Naive thymus-derived CD4-positive, alpha-beta T cell (primary cell): ENCODE measurements at regions of chr22 and their contacts with region 1.

Region 1: DNA sequence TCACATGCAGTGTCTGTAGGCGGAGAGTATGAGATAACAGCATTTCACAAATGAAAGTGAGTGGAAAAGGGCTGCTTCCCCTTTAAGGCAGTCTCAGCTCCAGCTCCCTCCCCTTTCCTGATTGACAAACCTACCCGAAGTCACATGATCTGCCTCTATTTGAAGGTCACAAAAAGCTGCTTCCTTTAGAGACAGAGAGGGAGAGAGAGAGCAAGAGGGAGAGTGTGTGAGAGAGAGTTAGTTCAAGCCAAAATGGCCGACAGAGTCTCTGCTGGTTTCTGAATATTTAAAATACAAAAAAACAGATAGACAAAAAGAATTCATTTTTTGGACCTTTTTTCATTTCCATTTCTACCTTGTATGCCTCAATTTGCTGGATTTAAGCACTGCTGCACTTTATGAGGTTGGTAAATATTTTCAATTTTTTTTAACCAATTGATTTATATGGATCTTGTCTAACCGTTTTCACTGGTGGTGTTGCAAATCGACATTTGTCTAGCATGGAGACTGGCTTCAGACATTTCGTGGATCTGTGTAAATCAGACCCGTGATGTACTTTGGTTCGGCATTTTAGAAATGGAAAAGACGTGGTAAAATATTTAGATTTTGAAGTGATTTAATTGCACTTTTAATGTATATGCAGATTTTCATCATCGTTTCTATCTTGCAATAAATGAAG is at the start of gene TNRC6B:
- DNase-seq: peak in 8 of 9 donors; percentile 68 to 95 (median 90)
- ATAC-seq: peak; percentile 98
- H3K4me3 ChIP-seq: peak within 1 kb of the TSS; percentile 72
- H3K4me3 Mint-ChIP-seq: peak within 1 kb of the TSS; percentile 80 to 97 (median 90)
- H3K27ac ChIP-seq: peak within 1 kb of the TSS; percentile 71
- H3K27ac Mint-ChIP-seq: peak within 1 kb of the TSS; percentile 85 to 94 (median 91)
- H3K4me1 ChIP-seq: peaks cover 35 to 44% of the 10 kb centered on the region in 2 donors
- H3K4me1 Mint-ChIP-seq: peaks cover 38 to 77% (median 63%) of the 10 kb centered on the region in 7 donors
- H3K27me3 ChIP-seq: no peaks in the 10 kb centered on the region
- H3K27me3 Mint-ChIP-seq: no peaks in the 10 kb centered on the region
- total RNA-seq, gene TNRC6B: 67.4 to 165 (median 146) TPM

Region 2: GRCh38 chr22:39800790-39801520 is 376.9 kb before region 1 on chr22:
- CTCF ChIA-PET with region 1: no interaction called
- POLR2A ChIA-PET with region 1: no interaction called
- intact Hi-C with region 1: no loop called
- DNase-seq: no peak
- ATAC-seq: no peak
- H3K4me3 ChIP-seq: no peak overlapping the region
- H3K4me3 Mint-ChIP-seq: no peak overlapping the region
- H3K27ac ChIP-seq: no peak overlapping the region
- H3K27ac Mint-ChIP-seq: no peak overlapping the region
- H3K4me1 ChIP-seq: no peaks in the 10 kb centered on the region
- H3K4me1 Mint-ChIP-seq: peaks cover 8 to 12% (median 11%) of the 10 kb centered on the region in 7 donors
- H3K27me3 ChIP-seq: no peaks in the 10 kb centered on the region
- H3K27me3 Mint-ChIP-seq: peaks cover 0 to 30% (median 6%) of the 10 kb centered on the region in 5 donors

Region 3: GRCh38 chr22:39825661-39826102 is 352.2 kb before region 1 on chr22:
- CTCF ChIA-PET with region 1: no interaction called
- POLR2A ChIA-PET with region 1: no interaction called
- intact Hi-C with region 1: no loop called
- DNase-seq: no peak
- ATAC-seq: no peak
- H3K4me3 ChIP-seq: no peak overlapping the region
- H3K4me3 Mint-ChIP-seq: no peak overlapping the region
- H3K27ac ChIP-seq: no peak overlapping the region
- H3K27ac Mint-ChIP-seq: no peak overlapping the region
- H3K4me1 ChIP-seq: no peaks in the 10 kb centered on the region
- H3K4me1 Mint-ChIP-seq: peaks cover 0 to 21% (median 6%) of the 10 kb centered on the region in 7 donors
- H3K27me3 ChIP-seq: no peaks in the 10 kb centered on the region
- H3K27me3 Mint-ChIP-seq: peaks cover 0 to 24% (median 0%) of the 10 kb centered on the region in 5 donors

Region 4: GRCh38 chr22:40044102-40044869 is 133.6 kb before region 1 on chr22:
- CTCF ChIA-PET with region 1: no interaction called
- POLR2A ChIA-PET with region 1: interaction called, 39 read pairs
- intact Hi-C with region 1: loop called (anchors 1 kb)
- DNase-seq: peak; percentile 87 to 100 (median 99)
- ATAC-seq: peak; percentile 92
- H3K4me3 ChIP-seq: peak overlapping the region; percentile 81
- H3K4me3 Mint-ChIP-seq: peak overlapping the region; percentile 94 to 99 (median 98)
- H3K27ac ChIP-seq: peak overlapping the region; percentile 88
- H3K27ac Mint-ChIP-seq: peak overlapping the region; percentile 98 to 100 (median 99)
- H3K4me1 ChIP-seq: peaks cover 15 to 29% of the 10 kb centered on the region in 2 donors
- H3K4me1 Mint-ChIP-seq: peaks cover 23 to 53% (median 40%) of the 10 kb centered on the region in 7 donors
- H3K27me3 ChIP-seq: no peaks in the 10 kb centered on the region
- H3K27me3 Mint-ChIP-seq: peaks cover 3 to 17% (median 7%) of the 10 kb centered on the region in 5 donors

Region 5: DNA sequence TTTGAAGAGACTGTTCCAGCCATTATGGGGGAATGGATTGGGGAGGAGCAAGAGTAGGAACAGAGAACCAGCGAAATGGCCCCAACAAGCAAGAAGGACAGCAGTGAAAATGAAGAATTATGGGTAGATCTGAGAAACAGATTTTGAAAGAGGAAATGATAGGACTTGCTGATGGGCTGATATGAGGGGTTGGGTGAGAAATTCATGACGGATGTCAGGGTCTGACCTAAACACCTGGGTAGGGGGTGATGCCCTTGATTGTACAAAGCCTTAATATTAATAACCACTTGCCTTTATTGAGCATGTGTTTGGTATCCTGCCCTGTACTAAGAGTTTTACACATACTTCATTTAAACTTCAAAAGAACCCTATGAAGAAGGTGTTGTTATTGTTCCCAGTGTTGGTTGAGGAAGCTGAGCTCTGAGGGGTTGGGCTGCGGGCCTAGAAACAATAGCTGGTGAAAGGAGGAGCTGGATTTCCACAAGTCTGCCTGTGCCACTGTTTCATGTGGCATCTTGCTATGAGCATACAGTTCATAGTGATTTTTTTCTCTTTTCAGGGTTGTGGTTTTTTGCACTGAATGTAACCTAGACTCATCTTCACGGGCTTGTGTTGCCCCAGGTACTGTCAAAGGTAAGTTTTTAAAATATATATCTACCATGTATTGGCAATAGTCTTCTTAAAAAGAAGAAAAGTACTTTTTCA is 61.2 kb before region 1 on chr22:
- CTCF ChIA-PET with region 1: no interaction called
- POLR2A ChIA-PET with region 1: interaction called, 4 read pairs
- intact Hi-C with region 1: loop called in 1 of 2 experiments (anchors 1 kb)
- DNase-seq: peak in 8 of 9 donors; percentile 26 to 88 (median 84)
- ATAC-seq: peak; percentile 95
- H3K4me3 ChIP-seq: peak overlapping the region; percentile 6
- H3K4me3 Mint-ChIP-seq: peak overlapping the region; percentile 26 to 89 (median 78)
- H3K27ac ChIP-seq: peak overlapping the region; percentile 48
- H3K27ac Mint-ChIP-seq: peak overlapping the region; percentile 79 to 94 (median 87)
- H3K4me1 ChIP-seq: peaks cover 24 to 64% of the 10 kb centered on the region in 2 donors
- H3K4me1 Mint-ChIP-seq: peaks cover 31 to 95% (median 92%) of the 10 kb centered on the region in 7 donors
- H3K27me3 ChIP-seq: no peaks in the 10 kb centered on the region
- H3K27me3 Mint-ChIP-seq: no peaks in the 10 kb centered on the region

Region 6: GRCh38 chr22:40215266-40215665 is 37.4 kb after region 1 on chr22:
- CTCF ChIA-PET with region 1: no interaction called
- POLR2A ChIA-PET with region 1: interaction called, 4 read pairs
- intact Hi-C with region 1: loop called (anchors 1 to 5 kb)
- DNase-seq: no peak
- ATAC-seq: peak; percentile 36
- H3K4me3 ChIP-seq: peak overlapping the region; percentile 28
- H3K4me3 Mint-ChIP-seq: peak overlapping the region; percentile 38 to 86 (median 70)
- H3K27ac ChIP-seq: peak overlapping the region; percentile 34
- H3K27ac Mint-ChIP-seq: peak overlapping the region; percentile 36 to 97 (median 90)
- H3K4me1 ChIP-seq: peaks cover 51 to 84% of the 10 kb centered on the region in 2 donors
- H3K4me1 Mint-ChIP-seq: peaks cover 82 to 95% (median 92%) of the 10 kb centered on the region in 7 donors
- H3K27me3 ChIP-seq: no peaks in the 10 kb centered on the region
- H3K27me3 Mint-ChIP-seq: no peaks in the 10 kb centered on the region

Region 7: GRCh38 chr22:40256516-40256915 is 78.6 kb after region 1 on chr22:
- CTCF ChIA-PET with region 1: no interaction called
- POLR2A ChIA-PET with region 1: no interaction called
- intact Hi-C with region 1: no loop called
- DNase-seq: no peak
- ATAC-seq: no peak
- H3K4me3 ChIP-seq: no peak overlapping the region
- H3K4me3 Mint-ChIP-seq: peak overlapping the region in 6 of 10 donors; percentile 1 to 62 (median 34)
- H3K27ac ChIP-seq: peak overlapping the region; percentile 11
- H3K27ac Mint-ChIP-seq: peak overlapping the region; percentile 35 to 89 (median 77)
- H3K4me1 ChIP-seq: peaks cover 10 to 19% of the 10 kb centered on the region in 2 donors
- H3K4me1 Mint-ChIP-seq: peaks cover 41 to 84% (median 75%) of the 10 kb centered on the region in 7 donors
- H3K27me3 ChIP-seq: no peaks in the 10 kb centered on the region
- H3K27me3 Mint-ChIP-seq: no peaks in the 10 kb centered on the region

Region 8: GRCh38 chr22:40289991-40290459 is 112.1 kb after region 1 on chr22:
- CTCF ChIA-PET with region 1: no interaction called
- POLR2A ChIA-PET with region 1: interaction called, 5 read pairs
- intact Hi-C with region 1: loop called in 1 of 2 experiments (anchors 1 kb)
- DNase-seq: peak; percentile 45 to 83 (median 75)
- ATAC-seq: peak; percentile 94
- H3K4me3 ChIP-seq: peak overlapping the region; percentile 15
- H3K4me3 Mint-ChIP-seq: peak overlapping the region; percentile 53 to 86 (median 78)
- H3K27ac ChIP-seq: peak overlapping the region; percentile 87
- H3K27ac Mint-ChIP-seq: peak overlapping the region; percentile 93 to 99 (median 96)
- H3K4me1 ChIP-seq: peaks cover 22 to 41% of the 10 kb centered on the region in 2 donors
- H3K4me1 Mint-ChIP-seq: peaks cover 25 to 80% (median 70%) of the 10 kb centered on the region in 7 donors
- H3K27me3 ChIP-seq: no peaks in the 10 kb centered on the region
- H3K27me3 Mint-ChIP-seq: no peaks in the 10 kb centered on the region